ENCODE measurements at regions of chr9 and their contacts with region 1.

Region 1: GRCh38 chr9:104991144-104991953 is 63.4 kb upstream of the ABCA1 start:
- DNase-seq: peak; percentile 91 to 92
- ATAC-seq: peak; percentile 95

Region 2: DNA sequence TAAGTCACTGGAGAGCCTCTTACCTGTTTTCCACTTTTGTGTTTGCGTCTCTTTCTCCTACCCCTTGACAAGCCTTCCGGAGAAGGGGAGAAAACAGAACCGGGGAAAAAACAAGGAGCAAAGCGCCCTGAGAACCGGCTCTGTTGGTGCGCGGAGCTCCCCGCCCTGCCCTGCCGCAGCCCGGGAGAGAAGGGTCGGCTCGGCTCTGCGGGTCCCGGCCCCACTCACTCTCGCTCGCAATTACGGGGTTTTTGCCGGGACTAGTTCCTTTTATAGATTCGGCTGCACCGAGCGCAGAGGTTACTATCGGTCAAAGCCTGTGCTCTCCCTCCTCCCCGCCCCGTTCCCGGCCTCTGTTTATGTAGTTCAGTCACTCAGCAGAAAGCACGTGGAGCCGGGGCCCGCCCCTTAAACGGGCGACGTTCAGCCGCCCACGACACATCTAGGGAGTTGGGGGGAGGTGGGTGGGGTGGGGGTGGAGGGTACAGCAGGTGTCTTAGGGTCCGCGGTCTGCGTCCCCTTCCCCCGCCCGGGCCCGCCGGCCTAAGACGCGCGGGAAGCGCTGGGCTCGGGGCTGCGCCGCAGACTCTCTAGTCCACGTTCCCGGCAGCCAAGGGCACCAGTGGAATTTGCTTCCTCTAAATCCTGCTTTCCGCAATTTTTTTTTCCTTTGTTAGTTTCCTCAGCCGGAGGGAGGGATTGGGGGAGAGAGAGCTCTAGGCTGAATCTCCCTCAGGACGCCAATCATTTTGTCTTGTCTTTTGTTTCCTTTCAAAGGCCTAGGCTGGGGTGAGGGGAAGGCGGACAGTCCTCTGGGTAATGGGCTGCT is 63.2 kb before region 1 on chr9 and contains the start of gene ABCA1:
- intact Hi-C with region 1: loop called in 1 of 2 experiments (anchors 10 kb)
- DNase-seq: peak; percentile 95 to 96
- ATAC-seq: peak; percentile 79
- total RNA-seq, gene ABCA1: 11.8 to 44.5 TPM

Region 3: GRCh38 chr9:105064315-105065097 is 73.2 kb after region 1 on chr9:
- intact Hi-C with region 1: loop called in 1 of 2 experiments (anchors 5 kb)
- DNase-seq: peak; percentile 91 to 96
- ATAC-seq: peak; percentile 95

Region 4: GRCh38 chr9:105157130-105157583 is 165.8 kb after region 1 on chr9:
- intact Hi-C with region 1: loop called in 1 of 2 experiments (anchors 10 kb)
- DNase-seq: peak; percentile 50 to 81
- ATAC-seq: peak; percentile 85

Region 5: DNA sequence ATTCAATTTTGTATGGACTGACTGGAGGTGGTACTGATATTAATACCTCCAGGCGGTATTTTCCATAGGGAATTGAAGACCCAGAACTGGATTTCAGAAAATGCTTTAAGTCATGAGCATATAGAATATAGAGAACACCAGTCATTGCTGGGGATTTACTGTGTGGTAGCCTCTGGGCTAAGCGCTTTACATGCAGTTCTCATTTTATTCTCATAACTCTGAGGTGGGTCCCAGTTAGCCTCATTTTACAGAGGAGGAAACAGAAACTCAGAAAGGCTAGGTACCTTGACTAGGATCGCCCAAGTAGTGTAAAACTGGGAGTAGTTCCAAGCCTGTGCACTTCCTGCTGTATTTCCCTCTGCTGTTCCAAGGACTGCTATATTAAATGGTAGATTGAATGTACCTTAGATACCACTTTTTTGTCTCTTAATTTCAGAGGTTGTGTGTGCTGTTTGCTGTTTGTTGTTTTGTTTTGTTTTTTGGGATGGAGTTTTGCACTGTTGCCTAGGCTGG is 266.9 kb after region 1 on chr9:
- intact Hi-C with region 1: no loop called
- DNase-seq: no peak
- ATAC-seq: peak; percentile 76

Measured in left colon (tissue), 2 donors.